ENCODE measurements at regions of chr14 and their contacts with region 1.

Region 1: GRCh38 chr14:34569750-34570149 is 30.2 kb upstream of the EAPP start:
- DNase-seq: no peak
- ATAC-seq: no peak
- H3K4me3 ChIP-seq: no peak overlapping the region
- H3K4me3 Mint-ChIP-seq: no peak overlapping the region
- H3K27ac ChIP-seq: no peak overlapping the region
- H3K27ac Mint-ChIP-seq: no peak overlapping the region
- H3K4me1 ChIP-seq: no peaks in the 10 kb centered on the region
- H3K4me1 Mint-ChIP-seq: no peaks in the 10 kb centered on the region
- H3K27me3 ChIP-seq: no peaks in the 10 kb centered on the region
- H3K27me3 Mint-ChIP-seq: no peaks in the 10 kb centered on the region
- CTCF ChIP-seq: no peak

Region 2: GRCh38 chr14:33788123-33788620 is 781.6 kb before region 1 on chr14:
- CTCF ChIA-PET with region 1: no interaction called
- POLR2A ChIA-PET with region 1: no interaction called
- intact Hi-C with region 1: no loop called
- DNase-seq: no peak
- ATAC-seq: no peak
- H3K4me3 ChIP-seq: no peak overlapping the region
- H3K4me3 Mint-ChIP-seq: no peak overlapping the region
- H3K27ac ChIP-seq: no peak overlapping the region
- H3K27ac Mint-ChIP-seq: no peak overlapping the region
- H3K4me1 ChIP-seq: no peaks in the 10 kb centered on the region
- H3K4me1 Mint-ChIP-seq: peaks cover 9% of the 10 kb centered on the region
- H3K27me3 ChIP-seq: no peaks in the 10 kb centered on the region
- H3K27me3 Mint-ChIP-seq: peaks cover 24% of the 10 kb centered on the region
- CTCF ChIP-seq: no peak

Region 3: GRCh38 chr14:34436118-34436880 is 133.5 kb before region 1 on chr14:
- CTCF ChIA-PET with region 1: no interaction called
- POLR2A ChIA-PET with region 1: no interaction called
- intact Hi-C with region 1: no loop called
- DNase-seq: no peak
- ATAC-seq: no peak
- H3K4me3 ChIP-seq: no peak overlapping the region
- H3K4me3 Mint-ChIP-seq: no peak overlapping the region
- H3K27ac ChIP-seq: no peak overlapping the region
- H3K27ac Mint-ChIP-seq: no peak overlapping the region
- H3K4me1 ChIP-seq: no peaks in the 10 kb centered on the region
- H3K4me1 Mint-ChIP-seq: no peaks in the 10 kb centered on the region
- H3K27me3 ChIP-seq: no peaks in the 10 kb centered on the region
- H3K27me3 Mint-ChIP-seq: no peaks in the 10 kb centered on the region
- CTCF ChIP-seq: no peak

Region 4: GRCh38 chr14:34522496-34522895 is 47.3 kb before region 1 on chr14:
- CTCF ChIA-PET with region 1: no interaction called
- POLR2A ChIA-PET with region 1: no interaction called
- intact Hi-C with region 1: loop called in 1 of 2 experiments (anchors 10 kb)
- DNase-seq: no peak
- ATAC-seq: no peak
- H3K4me3 ChIP-seq: no peak overlapping the region
- H3K4me3 Mint-ChIP-seq: no peak overlapping the region
- H3K27ac ChIP-seq: no peak overlapping the region
- H3K27ac Mint-ChIP-seq: no peak overlapping the region
- H3K4me1 ChIP-seq: no peaks in the 10 kb centered on the region
- H3K4me1 Mint-ChIP-seq: no peaks in the 10 kb centered on the region
- H3K27me3 ChIP-seq: no peaks in the 10 kb centered on the region
- H3K27me3 Mint-ChIP-seq: no peaks in the 10 kb centered on the region
- CTCF ChIP-seq: no peak

Region 5: GRCh38 chr14:34539407-34540180 is 30.2 kb before region 1 on chr14 and contains the start of gene EAPP:
- CTCF ChIA-PET with region 1: no interaction called
- POLR2A ChIA-PET with region 1: no interaction called
- intact Hi-C with region 1: loop called in 1 of 2 experiments (anchors 5 kb)
- DNase-seq: peak; percentile 88 to 97 (median 95)
- ATAC-seq: peak; percentile 98
- H3K4me3 ChIP-seq: peak within 1 kb of the TSS; percentile 94 to 95
- H3K4me3 Mint-ChIP-seq: peak within 1 kb of the TSS; percentile 97
- H3K27ac ChIP-seq: peak within 1 kb of the TSS; percentile 96 to 97
- H3K27ac Mint-ChIP-seq: peak within 1 kb of the TSS; percentile 98
- H3K4me1 ChIP-seq: peaks cover 16% of the 10 kb centered on the region
- H3K4me1 Mint-ChIP-seq: peaks cover 34% of the 10 kb centered on the region
- H3K27me3 ChIP-seq: no peaks in the 10 kb centered on the region
- H3K27me3 Mint-ChIP-seq: no peaks in the 10 kb centered on the region
- CTCF ChIP-seq: no peak
- total RNA-seq, gene EAPP: 91.0 to 91.4 TPM

Region 6: GRCh38 chr14:34582117-34582680 is 12.4 kb after region 1 on chr14:
- CTCF ChIA-PET with region 1: no interaction called
- POLR2A ChIA-PET with region 1: no interaction called
- intact Hi-C with region 1: no loop called
- DNase-seq: no peak
- ATAC-seq: no peak
- H3K4me3 ChIP-seq: no peak overlapping the region
- H3K4me3 Mint-ChIP-seq: no peak overlapping the region
- H3K27ac ChIP-seq: no peak overlapping the region
- H3K27ac Mint-ChIP-seq: no peak overlapping the region
- H3K4me1 ChIP-seq: no peaks in the 10 kb centered on the region
- H3K4me1 Mint-ChIP-seq: peaks cover 2% of the 10 kb centered on the region
- H3K27me3 ChIP-seq: no peaks in the 10 kb centered on the region
- H3K27me3 Mint-ChIP-seq: no peaks in the 10 kb centered on the region
- CTCF ChIP-seq: no peak

Measured in CD8-positive, alpha-beta T cell (primary cell).